ENCODE measurements at regions of chr12 and their contacts with region 1.

Region 1: DNA sequence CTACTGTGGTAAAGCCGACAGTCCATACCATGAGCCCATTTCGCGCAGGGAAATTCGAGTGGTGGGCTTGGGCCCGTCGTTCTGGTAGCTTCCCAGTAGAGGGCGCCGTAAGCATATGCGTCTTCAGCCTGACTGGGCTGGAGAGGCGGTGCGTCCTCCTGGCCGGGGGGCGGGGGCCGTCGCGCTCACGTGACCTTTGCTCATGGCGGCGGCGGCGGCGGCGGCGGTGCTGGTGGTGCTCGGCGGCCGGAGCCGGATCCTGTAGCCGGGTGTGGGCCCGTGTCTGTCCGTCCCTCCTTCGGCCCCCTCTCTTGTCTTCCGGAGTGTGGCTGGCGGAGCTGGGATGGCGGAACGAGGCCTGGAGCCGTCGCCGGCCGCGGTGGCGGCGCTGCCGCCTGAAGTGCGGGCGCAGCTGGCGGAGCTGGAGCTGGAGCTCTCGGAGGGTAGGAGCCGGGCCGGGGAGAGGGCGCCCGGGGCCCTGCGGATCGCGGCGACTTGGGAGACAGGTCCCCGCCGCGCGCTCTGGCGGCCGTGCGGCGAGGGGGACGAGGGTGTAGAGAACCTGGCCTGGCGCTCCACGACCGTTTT is at the start of gene DIP2B:
- DNase-seq: peak; percentile 88 to 99 (median 94)

Region 2: DNA sequence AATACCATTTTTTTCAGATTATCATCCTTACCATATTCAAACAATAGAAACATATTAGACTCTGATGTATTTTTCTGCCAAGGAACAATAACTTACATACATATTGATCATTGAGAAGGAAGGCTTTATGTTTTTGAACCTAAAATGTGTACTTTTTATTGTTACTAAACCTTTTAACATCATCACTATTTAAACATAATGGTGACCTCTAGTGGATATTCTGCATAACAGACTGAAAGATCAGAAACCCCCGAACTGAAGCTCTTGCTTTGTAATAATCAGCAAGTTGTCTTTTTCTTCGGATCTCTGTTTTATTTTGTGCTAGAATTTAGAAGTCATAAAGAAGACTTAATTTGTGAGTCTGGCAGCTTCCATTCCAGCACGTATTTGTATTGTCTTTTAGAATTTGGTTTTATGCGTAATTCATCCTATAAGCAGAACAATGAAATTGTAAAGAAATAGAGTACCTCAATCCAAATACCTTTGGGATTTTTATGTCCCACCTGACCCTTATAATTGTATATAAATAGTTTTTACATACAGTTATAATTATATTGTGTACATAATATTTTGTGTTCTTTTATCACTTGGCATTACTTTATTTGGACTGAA is 133.1 kb after region 1 on chr12:
- intact Hi-C with region 1: loop called (anchors 1 kb)
- DNase-seq: no peak

Region 3: DNA sequence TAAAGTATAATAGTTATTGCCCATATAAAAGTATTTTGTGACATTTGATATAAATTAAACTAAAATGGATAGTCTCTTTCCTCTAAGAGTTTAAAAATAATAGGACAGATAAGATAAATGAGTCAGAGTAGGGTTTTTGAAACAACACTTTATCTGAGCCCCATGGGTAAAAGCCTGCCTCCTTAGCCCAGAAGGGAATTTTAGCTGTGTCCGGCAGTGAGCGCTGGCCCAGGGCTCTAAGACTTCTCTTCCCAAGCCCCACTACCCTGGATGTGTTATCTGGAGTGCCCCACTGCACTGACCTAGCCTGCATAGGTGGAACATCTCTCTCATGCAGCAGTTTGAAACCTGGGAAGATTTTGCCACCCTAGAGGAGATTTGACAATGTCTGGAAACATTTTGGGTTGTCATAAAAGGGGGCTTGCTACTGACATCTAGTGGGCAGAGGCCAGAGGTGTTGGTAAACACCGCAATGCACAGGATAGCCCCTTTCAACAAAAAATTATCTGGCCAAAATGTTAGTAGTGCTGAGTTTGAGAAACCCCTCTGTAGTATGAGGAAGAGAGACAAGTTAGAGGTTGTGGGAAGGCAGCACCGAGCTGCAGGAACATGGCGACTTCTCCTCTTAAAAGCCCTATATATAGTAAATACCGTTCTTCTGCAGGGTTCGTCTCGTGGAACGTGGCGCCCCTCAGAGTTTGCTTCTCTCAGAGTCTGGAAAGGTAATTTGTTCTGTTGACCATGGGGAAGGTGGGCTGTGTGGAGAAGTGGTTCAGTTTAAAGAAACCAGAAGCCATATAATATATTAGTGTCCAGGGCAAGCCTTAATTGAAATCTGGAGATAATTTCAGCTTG is 229.7 kb after region 1 on chr12:
- intact Hi-C with region 1: loop called (anchors 2 kb)
- DNase-seq: peak in 3 of 10 donors; percentile 13 to 51 (median 22)

Region 4: GRCh38 chr12:50763639-50764285 is 258.9 kb after region 1 on chr12 and contains the start of gene ATF1:
- intact Hi-C with region 1: loop called (anchors 10 kb)
- DNase-seq: peak; percentile 85 to 99 (median 90)